Right cardiac atrium (tissue), 5 donors: ENCODE measurements at regions of chr14 and their contacts with region 1.

Region 1: DNA sequence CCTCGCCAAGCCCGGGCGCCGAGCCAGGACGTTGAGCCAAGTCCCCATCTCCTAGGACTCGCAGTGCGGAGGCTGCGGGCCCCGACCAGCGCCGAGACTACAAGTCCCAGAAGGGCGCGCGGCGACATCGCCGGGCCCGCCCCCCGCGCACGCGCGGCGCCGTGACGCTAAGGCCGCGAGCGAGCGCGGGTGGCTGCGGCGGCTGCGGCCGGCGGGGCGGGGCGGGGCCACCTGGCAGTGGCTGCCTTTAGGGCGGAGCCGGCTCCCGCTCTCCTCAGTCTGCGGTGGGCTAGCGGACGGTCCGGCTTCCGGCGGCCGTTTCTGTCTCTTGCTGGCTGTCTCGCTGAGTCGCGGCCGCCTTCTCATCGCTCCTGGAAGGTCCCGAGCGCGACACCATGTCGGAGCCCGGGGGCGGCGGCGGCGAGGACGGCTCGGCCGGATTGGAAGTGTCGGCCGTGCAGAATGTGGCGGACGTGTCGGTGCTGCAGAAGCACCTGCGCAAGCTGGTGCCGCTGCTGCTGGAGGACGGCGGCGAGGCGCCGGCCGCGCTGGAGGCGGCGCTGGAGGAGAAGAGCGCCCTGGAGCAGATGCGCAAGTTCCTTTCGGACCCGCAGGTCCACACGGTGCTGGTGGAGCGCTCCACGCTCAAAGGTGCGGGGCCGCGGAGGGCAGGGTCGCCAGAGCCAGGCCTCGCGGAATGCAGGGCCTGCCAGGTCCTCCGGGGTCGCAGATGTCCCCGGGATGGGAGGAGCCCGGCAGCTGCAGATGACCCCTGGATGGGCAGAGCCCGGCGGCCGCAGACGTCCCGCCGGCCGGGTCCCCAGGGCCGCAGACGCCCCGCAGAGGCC is at the start of gene DYNC1H1:
- DNase-seq: peak; percentile 98 to 99 (median 99)
- ATAC-seq: peak; percentile 92 to 93
- H3K4me3 ChIP-seq: peak within 1 kb of the TSS; percentile 69
- H3K27ac ChIP-seq: peak within 1 kb of the TSS; percentile 49
- H3K4me1 ChIP-seq: no peaks in the 10 kb centered on the region
- H3K27me3 ChIP-seq: no peaks in the 10 kb centered on the region
- total RNA-seq, gene DYNC1H1: 287 to 411 (median 341) TPM

Region 2: GRCh38 chr14:101695659-101696058 is 268.9 kb before region 1 on chr14:
- intact Hi-C with region 1: no loop called
- DNase-seq: no peak
- ATAC-seq: no peak
- H3K4me3 ChIP-seq: no peak overlapping the region
- H3K27ac ChIP-seq: no peak overlapping the region
- H3K4me1 ChIP-seq: no peaks in the 10 kb centered on the region
- H3K27me3 ChIP-seq: no peaks in the 10 kb centered on the region

Region 3: DNA sequence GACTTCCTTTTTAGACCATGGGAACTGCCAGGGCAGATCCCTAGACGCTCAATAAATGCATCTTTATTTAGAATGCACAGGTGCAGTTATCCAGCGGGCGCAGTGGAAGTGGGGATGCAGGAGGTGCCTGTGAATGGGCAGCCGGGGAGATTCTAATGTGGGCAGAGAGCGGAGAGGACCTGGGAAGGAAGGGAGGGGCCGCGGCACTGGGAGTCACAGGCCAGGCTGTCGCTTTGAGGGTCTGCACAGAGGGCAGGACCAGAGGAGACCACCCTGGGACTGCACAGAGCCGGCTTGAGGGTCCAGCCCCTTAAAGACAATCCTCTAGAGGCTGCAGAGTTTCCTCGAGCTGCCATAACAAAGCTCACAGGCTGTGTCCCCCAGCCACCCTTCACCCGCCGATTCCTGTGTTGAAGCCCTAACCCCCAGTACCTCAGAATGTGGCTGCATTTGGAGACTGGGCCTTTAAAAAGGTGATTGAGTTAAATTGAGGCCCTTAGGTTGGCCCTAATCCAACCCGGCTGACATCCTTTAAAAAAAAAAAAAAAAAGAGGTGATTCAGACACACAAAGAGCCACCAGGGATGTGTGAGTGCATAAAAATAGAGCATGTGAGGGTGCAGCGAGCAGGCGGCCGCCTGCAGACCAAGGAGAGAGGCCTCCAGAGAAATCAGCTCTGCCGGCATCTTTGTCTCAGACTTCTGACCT is 247.4 kb before region 1 on chr14:
- intact Hi-C with region 1: loop called in 1 of 4 experiments (anchors 10 kb)
- DNase-seq: no peak
- ATAC-seq: no peak
- H3K4me3 ChIP-seq: no peak overlapping the region
- H3K27ac ChIP-seq: no peak overlapping the region
- H3K4me1 ChIP-seq: peaks cover 6% of the 10 kb centered on the region
- H3K27me3 ChIP-seq: no peaks in the 10 kb centered on the region

Region 4: GRCh38 chr14:102020058-102020971 is 55.8 kb after region 1 on chr14:
- intact Hi-C with region 1: no loop called
- DNase-seq: no peak
- ATAC-seq: no peak
- H3K4me3 ChIP-seq: no peak overlapping the region
- H3K27ac ChIP-seq: no peak overlapping the region
- H3K4me1 ChIP-seq: no peaks in the 10 kb centered on the region
- H3K27me3 ChIP-seq: no peaks in the 10 kb centered on the region

Region 5: GRCh38 chr14:102086972-102087761 is 122.6 kb after region 1 on chr14 and contains the start of gene HSP90AA1:
- intact Hi-C with region 1: loop called in 1 of 4 experiments (anchors 10 kb)
- DNase-seq: peak; percentile 95 to 98 (median 97)
- ATAC-seq: peak; percentile 87 to 90
- H3K4me3 ChIP-seq: peak within 1 kb of the TSS; percentile 100
- H3K27ac ChIP-seq: peak within 1 kb of the TSS; percentile 96
- H3K4me1 ChIP-seq: peaks cover 4% of the 10 kb centered on the region
- H3K27me3 ChIP-seq: no peaks in the 10 kb centered on the region
- total RNA-seq, gene HSP90AA1: 381 to 731 (median 541) TPM

Region 6: GRCh38 chr14:102097115-102097787 is 132.7 kb after region 1 on chr14:
- intact Hi-C with region 1: no loop called
- DNase-seq: no peak
- ATAC-seq: no peak
- H3K4me3 ChIP-seq: no peak overlapping the region
- H3K27ac ChIP-seq: no peak overlapping the region
- H3K4me1 ChIP-seq: peaks cover 3% of the 10 kb centered on the region
- H3K27me3 ChIP-seq: no peaks in the 10 kb centered on the region